GM12878 (cell line): ENCODE measurements at regions of chr1 and their contacts with region 1.

Region 1: GRCh38 chr1:157312082-157312812 is 174.1 kb upstream of the ETV3 start:
- DNase-seq: no peak
- ATAC-seq: no peak
- H3K4me3 ChIP-seq: no peak overlapping the region
- H3K27ac ChIP-seq: no peak overlapping the region
- H3K4me1 ChIP-seq: peaks cover 12% of the 10 kb centered on the region
- H3K27me3 ChIP-seq: no peaks in the 10 kb centered on the region; a peak in 2 of 4 replicates
- CTCF ChIP-seq: no peak
- EP300 ChIP-seq: no peak
- POLR2A ChIP-seq: no peak
- RAD21 ChIP-seq: no peak

Region 2: GRCh38 chr1:157199421-157199755 is 112.9 kb before region 1 on chr1:
- CTCF ChIA-PET with region 1: interaction called, 15 read pairs
- POLR2A ChIA-PET with region 1: no interaction called
- RAD21 ChIA-PET with region 1: interaction called, 7 read pairs
- SMC1A ChIA-PET with region 1: interaction called, 10 read pairs
- in situ Hi-C with region 1: no loop called
- intact Hi-C with region 1: loop called (anchors 5 kb)
- DNase-seq: no peak
- ATAC-seq: no peak; the same call in 1 of the 3 replicates
- H3K4me3 ChIP-seq: no peak overlapping the region
- H3K27ac ChIP-seq: no peak overlapping the region
- H3K4me1 ChIP-seq: no peaks in the 10 kb centered on the region
- H3K27me3 ChIP-seq: no peaks in the 10 kb centered on the region
- CTCF ChIP-seq: no peak
- EP300 ChIP-seq: no peak
- POLR2A ChIP-seq: no peak
- RAD21 ChIP-seq: no peak

Region 3: GRCh38 chr1:157249326-157249725 is 62.9 kb before region 1 on chr1:
- CTCF ChIA-PET with region 1: no interaction called
- POLR2A ChIA-PET with region 1: no interaction called
- RAD21 ChIA-PET with region 1: no interaction called
- SMC1A ChIA-PET with region 1: no interaction called
- in situ Hi-C with region 1: no loop called
- intact Hi-C with region 1: loop called (anchors 5 kb)
- DNase-seq: peak; percentile 56
- ATAC-seq: peak; percentile 96
- H3K4me3 ChIP-seq: no peak overlapping the region
- H3K27ac ChIP-seq: no peak overlapping the region
- H3K4me1 ChIP-seq: peaks cover 7% of the 10 kb centered on the region
- H3K27me3 ChIP-seq: 0 out of 4 replicates have a peak, but pooled peaks cover 0 to 4% of the 10 kb centered on the region in 2 experiments
- CTCF ChIP-seq: no peak
- EP300 ChIP-seq: peak; percentile 55 to 84; a peak in 2 of 4 replicates
- POLR2A ChIP-seq: no peak
- RAD21 ChIP-seq: no peak

Region 4: DNA sequence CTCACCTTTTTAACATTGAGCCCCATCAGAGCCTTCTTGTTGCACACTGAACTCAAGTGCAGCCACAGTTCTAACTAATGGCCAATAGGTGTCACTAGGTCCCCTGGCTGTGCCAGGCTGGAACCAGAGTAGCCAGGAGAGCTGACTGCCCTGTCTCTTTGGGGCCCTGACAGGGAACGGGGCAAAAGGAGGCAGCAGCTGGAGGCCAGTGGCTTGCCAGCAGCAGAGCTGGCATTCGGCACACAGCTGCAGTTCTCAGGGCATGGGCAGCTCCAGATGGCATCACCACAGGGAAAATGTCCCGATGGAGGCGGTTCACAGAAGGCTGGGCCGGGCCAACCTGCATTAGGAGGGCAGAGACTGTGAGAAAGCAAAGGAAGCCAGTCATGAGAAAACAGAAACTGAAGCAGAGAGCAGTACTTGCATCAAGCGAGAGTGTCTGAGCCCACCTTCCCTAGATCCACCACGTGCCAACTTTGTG is 51.5 kb after region 1 on chr1:
- CTCF ChIA-PET with region 1: interaction called, 10 read pairs
- POLR2A ChIA-PET with region 1: no interaction called
- RAD21 ChIA-PET with region 1: no interaction called
- SMC1A ChIA-PET with region 1: interaction called, 4 read pairs
- in situ Hi-C with region 1: no loop called
- intact Hi-C with region 1: loop called (anchors 5 kb)
- DNase-seq: peak; percentile 20
- ATAC-seq: peak; percentile 98
- H3K4me3 ChIP-seq: no peak overlapping the region
- H3K27ac ChIP-seq: no peak overlapping the region; the same call in 1 of the 2 replicates
- H3K4me1 ChIP-seq: peaks cover 11% of the 10 kb centered on the region
- H3K27me3 ChIP-seq: no peaks in the 10 kb centered on the region
- CTCF ChIP-seq: peak; percentile 57 to 72 (median 70)
- EP300 ChIP-seq: no peak
- POLR2A ChIP-seq: no peak
- RAD21 ChIP-seq: peak; percentile 49; the same call in 1 of the 2 replicates

Region 5: DNA sequence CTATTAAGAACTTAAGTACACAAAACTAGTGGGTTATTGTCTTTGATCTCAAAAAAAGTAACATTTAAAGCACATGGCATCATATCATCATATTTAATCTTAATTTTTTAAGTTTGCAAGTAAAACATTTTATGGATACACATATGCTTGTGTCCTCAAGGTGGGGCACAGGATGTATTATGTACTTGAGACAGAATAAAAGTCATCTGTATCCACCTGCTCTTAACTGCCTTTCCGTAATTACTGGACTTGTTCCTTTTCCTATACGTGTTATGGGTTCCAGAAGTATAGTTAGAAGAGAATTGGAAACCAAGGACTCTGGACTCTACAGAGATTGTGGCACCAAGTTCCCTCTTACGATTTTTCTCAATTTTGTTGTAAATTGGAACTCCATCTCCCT is 160.7 kb after region 1 on chr1:
- CTCF ChIA-PET with region 1: no interaction called
- POLR2A ChIA-PET with region 1: no interaction called
- RAD21 ChIA-PET with region 1: no interaction called
- SMC1A ChIA-PET with region 1: no interaction called
- in situ Hi-C with region 1: no loop called
- intact Hi-C with region 1: loop called (anchors 5 kb)
- DNase-seq: no peak
- ATAC-seq: no peak
- H3K4me3 ChIP-seq: no peak overlapping the region
- H3K27ac ChIP-seq: no peak overlapping the region
- H3K4me1 ChIP-seq: no peaks in the 10 kb centered on the region
- H3K27me3 ChIP-seq: no peaks in the 10 kb centered on the region; a peak in 2 of 4 replicates
- CTCF ChIP-seq: no peak
- EP300 ChIP-seq: no peak
- POLR2A ChIP-seq: no peak
- RAD21 ChIP-seq: no peak

Region 6: GRCh38 chr1:157490467-157491165 is 178.4 kb after region 1 on chr1:
- CTCF ChIA-PET with region 1: interaction called, 13 read pairs
- POLR2A ChIA-PET with region 1: no interaction called
- RAD21 ChIA-PET with region 1: interaction called, 4 read pairs
- SMC1A ChIA-PET with region 1: interaction called, 4 read pairs
- in situ Hi-C with region 1: no loop called
- intact Hi-C with region 1: loop called (anchors 1 kb)
- DNase-seq: no peak
- ATAC-seq: peak; percentile 77
- H3K4me3 ChIP-seq: no peak overlapping the region
- H3K27ac ChIP-seq: no peak overlapping the region
- H3K4me1 ChIP-seq: no peaks in the 10 kb centered on the region
- H3K27me3 ChIP-seq: 0 out of 4 replicates have a peak, but pooled peaks cover 0 to 2% of the 10 kb centered on the region in 2 experiments
- CTCF ChIP-seq: peak; percentile 67 to 73 (median 70)
- EP300 ChIP-seq: no peak
- POLR2A ChIP-seq: no peak
- RAD21 ChIP-seq: peak; percentile 67